ENCODE measurements at regions of chr11 and their contacts with region 1.

Region 1: GRCh38 chr11:134253188-134253993 is at the starts of genes ACAD8 and THYN1:
- DNase-seq: peak; percentile 96
- ATAC-seq: peak; percentile 100
- H3K4me3 ChIP-seq: peak within 1 kb of the TSS; percentile 81 to 100 (median 93)
- H3K4me3 Mint-ChIP-seq: peak within 1 kb of the TSS; percentile 91
- H3K27ac ChIP-seq: peak within 1 kb of the TSS; percentile 42 to 45
- H3K27ac Mint-ChIP-seq: peak within 1 kb of the TSS; percentile 69
- H3K4me1 ChIP-seq: peaks cover 10 to 15% of the 10 kb centered on the region in 2 donors
- H3K4me1 Mint-ChIP-seq: peaks cover 28% of the 10 kb centered on the region
- H3K27me3 ChIP-seq: no peaks in the 10 kb centered on the region
- H3K27me3 Mint-ChIP-seq: no peaks in the 10 kb centered on the region
- CTCF ChIP-seq: peak; percentile 40
- total RNA-seq, gene ACAD8: 33.6 and 35.6 TPM in 2 replicates
- total RNA-seq, gene THYN1: 35.7 and 38.4 TPM in 2 replicates

Region 2: GRCh38 chr11:134068829-134069425 is 184.5 kb before region 1 on chr11 and contains the start of gene JAM3:
- CTCF ChIA-PET with region 1: no interaction called
- POLR2A ChIA-PET with region 1: no interaction called
- intact Hi-C with region 1: loop called (anchors 1 kb)
- DNase-seq: peak; percentile 98
- ATAC-seq: peak; percentile 85
- H3K4me3 ChIP-seq: peak within 1 kb of the TSS in 4 of 5 experiments; percentile 40 to 75 (median 66)
- H3K4me3 Mint-ChIP-seq: peak within 1 kb of the TSS; percentile 92
- H3K27ac ChIP-seq: peak within 1 kb of the TSS in 1 of 2 donors; percentile 78
- H3K27ac Mint-ChIP-seq: peak within 1 kb of the TSS; percentile 90
- H3K4me1 ChIP-seq: peaks cover 21 to 32% of the 10 kb centered on the region in 2 donors
- H3K4me1 Mint-ChIP-seq: peaks cover 42% of the 10 kb centered on the region
- H3K27me3 ChIP-seq: no peaks in the 10 kb centered on the region
- H3K27me3 Mint-ChIP-seq: peaks cover 13% of the 10 kb centered on the region
- CTCF ChIP-seq: no peak
- total RNA-seq, gene JAM3: 28.0 and 29.6 TPM in 2 replicates

Region 3: DNA sequence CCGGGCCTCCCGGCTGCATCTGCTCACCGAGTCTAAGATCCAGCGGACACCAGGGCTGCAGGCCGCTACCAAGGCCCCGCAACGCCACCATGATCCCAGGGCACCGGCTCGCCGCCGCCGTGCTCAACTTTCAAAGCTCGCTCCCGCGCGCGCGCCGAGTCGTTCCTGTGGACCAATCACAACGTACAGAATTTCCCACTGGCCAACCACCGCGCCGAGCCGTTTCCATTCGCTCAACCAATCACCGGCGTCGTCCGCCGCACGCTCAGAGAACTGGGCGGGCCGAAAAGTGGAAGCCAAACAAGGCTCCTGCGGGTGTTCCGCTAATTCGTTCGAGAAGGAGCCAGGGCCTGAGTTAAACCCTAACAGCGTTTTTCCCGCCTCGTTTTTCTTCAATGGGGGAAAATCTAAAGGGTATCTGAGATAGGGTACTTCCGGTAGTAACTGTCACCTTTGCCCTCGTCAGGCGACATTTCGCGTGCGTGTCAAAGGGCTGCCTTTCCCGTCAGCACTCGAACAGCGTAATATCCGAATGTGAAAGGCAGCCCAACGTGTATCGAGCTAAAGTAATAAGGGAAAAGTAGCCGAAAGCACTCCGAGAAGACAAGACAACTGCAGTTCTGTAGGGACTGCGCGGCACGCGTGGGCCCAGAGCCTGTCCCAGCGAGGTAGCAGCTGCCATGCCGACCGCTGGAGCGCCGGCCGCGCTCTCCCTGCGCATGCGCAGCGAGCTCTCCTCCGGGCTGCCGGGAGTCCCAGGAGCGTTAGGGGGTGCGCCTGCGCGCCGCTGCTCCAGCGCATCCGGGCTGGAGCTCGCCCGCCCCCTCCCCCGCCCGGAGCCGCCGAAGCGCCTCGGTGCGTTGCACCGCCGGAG is 29.3 kb before region 1 on chr11 and contains the starts of genes NCAPD3 and VPS26B:
- CTCF ChIA-PET with region 1: interaction called, 14 read pairs
- POLR2A ChIA-PET with region 1: interaction called, 6 read pairs
- intact Hi-C with region 1: loop called (anchors 1 kb)
- DNase-seq: peak; percentile 97
- ATAC-seq: peak; percentile 76
- H3K4me3 ChIP-seq: peak within 1 kb of the TSS; percentile 74 to 98 (median 96)
- H3K4me3 Mint-ChIP-seq: peak within 1 kb of the TSS; percentile 96
- H3K27ac ChIP-seq: peak within 1 kb of the TSS; percentile 90 to 91
- H3K27ac Mint-ChIP-seq: peak within 1 kb of the TSS; percentile 97
- H3K4me1 ChIP-seq: peaks cover 34 to 44% of the 10 kb centered on the region in 2 donors
- H3K4me1 Mint-ChIP-seq: peaks cover 47% of the 10 kb centered on the region
- H3K27me3 ChIP-seq: peaks cover 0 to 25% (median 15%) of the 10 kb centered on the region in 4 experiments
- H3K27me3 Mint-ChIP-seq: peaks cover 15% of the 10 kb centered on the region
- CTCF ChIP-seq: no peak
- total RNA-seq, gene NCAPD3: 32.2 and 34.2 TPM in 2 replicates
- total RNA-seq, gene VPS26B: 35.3 and 38.5 TPM in 2 replicates

Region 4: GRCh38 chr11:134289789-134290188 is 36.4 kb after region 1 on chr11:
- CTCF ChIA-PET with region 1: no interaction called
- POLR2A ChIA-PET with region 1: no interaction called
- intact Hi-C with region 1: no loop called
- DNase-seq: no peak
- ATAC-seq: no peak
- H3K4me3 ChIP-seq: no peak overlapping the region
- H3K4me3 Mint-ChIP-seq: no peak overlapping the region
- H3K27ac ChIP-seq: no peak overlapping the region
- H3K27ac Mint-ChIP-seq: no peak overlapping the region
- H3K4me1 ChIP-seq: no peaks in the 10 kb centered on the region
- H3K4me1 Mint-ChIP-seq: no peaks in the 10 kb centered on the region
- H3K27me3 ChIP-seq: peaks cover 0 to 3% (median 1%) of the 10 kb centered on the region in 4 experiments
- H3K27me3 Mint-ChIP-seq: peaks cover 25% of the 10 kb centered on the region
- CTCF ChIP-seq: no peak

Region 5: GRCh38 chr11:134331354-134332188 is 78.2 kb after region 1 on chr11 and contains the start of gene GLB1L2:
- CTCF ChIA-PET with region 1: no interaction called
- POLR2A ChIA-PET with region 1: no interaction called
- intact Hi-C with region 1: loop called (anchors 1 kb)
- DNase-seq: peak; percentile 79
- ATAC-seq: peak; percentile 92
- H3K4me3 ChIP-seq: peak within 1 kb of the TSS; percentile 11 to 69 (median 53)
- H3K4me3 Mint-ChIP-seq: peak within 1 kb of the TSS; percentile 86
- H3K27ac ChIP-seq: no peak within 1 kb of the TSS
- H3K27ac Mint-ChIP-seq: peak within 1 kb of the TSS; percentile 32
- H3K4me1 ChIP-seq: peaks cover 18 to 19% of the 10 kb centered on the region in 2 donors
- H3K4me1 Mint-ChIP-seq: peaks cover 14% of the 10 kb centered on the region
- H3K27me3 ChIP-seq: peaks cover 2 to 39% (median 16%) of the 10 kb centered on the region in 4 experiments
- H3K27me3 Mint-ChIP-seq: peaks cover 58% of the 10 kb centered on the region
- CTCF ChIP-seq: no peak
- total RNA-seq, gene GLB1L2: 0.36 and 0.44 TPM in 2 replicates

Measured in B cell (primary cell).